ENCODE measurements at regions of chr12 and their contacts with region 1.

Region 1: DNA sequence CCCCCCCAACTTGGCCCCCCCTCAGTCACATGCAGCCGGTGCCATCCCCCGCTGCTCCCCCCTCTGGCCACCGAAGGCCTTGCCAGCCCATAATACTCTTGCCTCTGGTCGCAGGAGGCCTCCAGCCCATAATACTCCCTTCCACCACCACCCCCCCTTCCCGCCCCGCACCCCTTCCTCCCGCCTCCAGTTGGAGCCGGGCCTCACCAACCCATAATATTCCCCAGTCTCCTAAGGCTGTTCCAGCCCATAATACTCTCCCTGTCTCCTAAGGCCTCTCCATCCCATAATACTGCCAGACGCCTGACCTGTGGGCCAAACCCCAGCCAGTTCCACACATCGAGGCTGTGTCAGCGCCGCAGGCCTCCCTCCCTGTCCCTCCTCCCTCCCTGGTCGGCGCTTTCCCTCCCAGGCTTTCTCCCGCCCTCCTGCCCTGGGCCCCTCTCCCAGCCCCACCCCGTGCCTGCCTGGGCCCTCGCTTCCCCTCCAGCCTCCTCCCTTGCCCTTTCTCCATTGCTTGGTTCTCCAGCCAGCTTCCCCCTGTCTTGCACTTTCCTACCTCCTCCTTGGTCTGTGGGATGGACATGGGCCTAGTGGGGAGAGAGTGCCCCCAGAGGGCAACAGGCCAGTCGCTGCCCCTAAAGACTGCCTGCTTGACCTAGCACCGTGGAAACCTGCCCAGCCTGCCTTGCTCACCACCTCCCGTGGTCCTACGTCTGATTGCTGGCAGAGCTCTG is 6.8 kb upstream of the CHD4 start:
- DNase-seq: peak; percentile 87
- H3K4me3 ChIP-seq: no peak overlapping the region
- H3K27ac ChIP-seq: no peak overlapping the region
- H3K4me1 ChIP-seq: peaks cover 11% of the 10 kb centered on the region
- H3K27me3 ChIP-seq: no peaks in the 10 kb centered on the region
- CTCF ChIP-seq: no peak
- POLR2A ChIP-seq: peak; percentile 39

Region 2: DNA sequence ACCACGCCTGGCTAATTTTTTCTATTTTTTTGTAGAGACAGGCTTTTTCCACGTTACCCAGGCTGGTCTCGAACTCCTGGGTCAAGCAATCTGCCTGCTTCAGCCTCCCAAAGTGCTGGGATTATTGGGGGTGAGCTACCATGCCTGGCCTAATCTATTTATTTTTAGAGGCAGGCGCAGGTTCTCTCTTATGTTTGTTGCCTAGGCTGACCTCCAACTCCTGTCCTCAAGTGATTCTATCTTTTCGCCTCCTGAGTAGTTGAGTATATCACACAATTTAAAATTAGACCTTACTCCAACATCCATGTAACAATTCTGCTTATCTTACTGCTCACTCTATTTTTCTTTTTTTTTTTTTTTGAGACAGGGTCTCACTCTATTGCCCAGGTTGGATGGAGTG is 40.0 kb after region 1 on chr12:
- CTCF ChIA-PET with region 1: no interaction called
- POLR2A ChIA-PET with region 1: no interaction called
- dilution Hi-C with region 1: no loop called
- intact Hi-C with region 1: no loop called
- DNase-seq: no peak
- H3K4me3 ChIP-seq: no peak overlapping the region
- H3K27ac ChIP-seq: no peak overlapping the region
- H3K4me1 ChIP-seq: no peaks in the 10 kb centered on the region
- H3K27me3 ChIP-seq: no peaks in the 10 kb centered on the region
- CTCF ChIP-seq: no peak
- POLR2A ChIP-seq: no peak

Region 3: DNA sequence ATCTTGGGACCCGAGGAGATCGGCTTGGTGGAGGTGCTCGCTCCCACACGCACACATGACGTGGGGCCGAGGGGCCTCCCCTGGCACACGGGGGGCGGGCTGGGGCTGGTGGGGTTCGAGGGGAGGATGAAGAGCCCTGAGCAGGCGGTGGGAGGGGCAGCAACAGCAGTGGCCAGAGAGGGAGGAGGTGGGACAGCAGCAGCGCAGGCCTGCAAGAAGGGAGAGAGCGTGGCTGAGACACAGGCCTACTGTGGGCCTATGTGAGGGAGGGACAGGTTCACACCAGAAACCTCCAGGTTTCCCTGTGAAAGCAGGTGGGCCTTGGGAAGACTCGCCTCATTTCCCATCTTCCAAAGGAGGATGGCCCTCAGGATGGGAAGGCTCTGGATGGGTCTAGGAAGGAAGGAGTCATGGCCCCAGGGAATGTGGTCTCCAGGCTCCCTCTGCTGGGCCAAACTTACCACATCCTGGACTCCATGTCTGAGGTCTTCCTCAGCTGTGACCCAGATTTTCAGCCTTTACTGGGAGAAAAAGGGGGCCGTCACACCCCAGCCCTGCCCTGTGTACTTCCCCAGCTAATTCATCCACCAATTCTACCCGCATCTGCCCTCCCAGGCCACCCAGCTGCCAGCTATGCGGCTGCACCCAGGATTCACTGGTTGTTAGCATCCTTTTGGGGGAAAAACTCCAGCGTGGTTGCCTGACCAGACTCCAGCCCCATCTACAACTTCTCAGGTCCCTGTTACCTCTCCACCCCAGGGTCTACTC is 83.8 kb after region 1 on chr12:
- CTCF ChIA-PET with region 1: interaction called, 63 read pairs
- POLR2A ChIA-PET with region 1: interaction called, 4 read pairs
- dilution Hi-C with region 1: no loop called
- intact Hi-C with region 1: loop called (anchors 1 kb)
- DNase-seq: peak; percentile 58
- H3K4me3 ChIP-seq: no peak overlapping the region
- H3K27ac ChIP-seq: no peak overlapping the region
- H3K4me1 ChIP-seq: peaks cover 4% of the 10 kb centered on the region
- H3K27me3 ChIP-seq: peaks cover 28 to 42% of the 10 kb centered on the region in 2 experiments
- CTCF ChIP-seq: peak; percentile 74 to 80
- POLR2A ChIP-seq: no peak

Region 4: GRCh38 chr12:6723607-6724396 is 109.9 kb after region 1 on chr12 and contains the start of gene COPS7A:
- CTCF ChIA-PET with region 1: interaction called, 3 read pairs
- POLR2A ChIA-PET with region 1: no interaction called
- dilution Hi-C with region 1: no loop called
- intact Hi-C with region 1: loop called (anchors 1 kb)
- DNase-seq: peak; percentile 98
- H3K4me3 ChIP-seq: peak within 1 kb of the TSS; percentile 45 to 48 (median 47)
- H3K27ac ChIP-seq: peak within 1 kb of the TSS; percentile 52
- H3K4me1 ChIP-seq: peaks cover 11% of the 10 kb centered on the region
- H3K27me3 ChIP-seq: no peaks in the 10 kb centered on the region
- CTCF ChIP-seq: no peak
- POLR2A ChIP-seq: peak; percentile 35
- total RNA-seq, gene COPS7A: 36.5 and 41.1 TPM in 2 replicates

Region 5: GRCh38 chr12:6778574-6779550 is 164.9 kb after region 1 on chr12:
- CTCF ChIA-PET with region 1: interaction called, 3 read pairs
- POLR2A ChIA-PET with region 1: no interaction called
- dilution Hi-C with region 1: no loop called
- intact Hi-C with region 1: loop called (anchors 1 kb)
- DNase-seq: peak; percentile 94
- H3K4me3 ChIP-seq: peak overlapping the region in 1 of 3 experiments; percentile 6
- H3K27ac ChIP-seq: no peak overlapping the region
- H3K4me1 ChIP-seq: peaks cover 5% of the 10 kb centered on the region
- H3K27me3 ChIP-seq: no peaks in the 10 kb centered on the region
- CTCF ChIP-seq: peak; percentile 93 to 95
- POLR2A ChIP-seq: peak; percentile 22

Region 6: GRCh38 chr12:6825398-6826124 is 211.6 kb after region 1 on chr12:
- CTCF ChIA-PET with region 1: interaction called, 5 read pairs
- POLR2A ChIA-PET with region 1: no interaction called
- dilution Hi-C with region 1: no loop called
- intact Hi-C with region 1: loop called (anchors 1 kb)
- DNase-seq: peak; percentile 87
- H3K4me3 ChIP-seq: no peak overlapping the region
- H3K27ac ChIP-seq: no peak overlapping the region
- H3K4me1 ChIP-seq: peaks cover 23% of the 10 kb centered on the region
- H3K27me3 ChIP-seq: peaks cover 3% of the 10 kb centered on the region in 2 experiments
- CTCF ChIP-seq: peak; percentile 95
- POLR2A ChIP-seq: no peak

Measured in endothelial cell of umbilical vein (primary cell).